ENCODE measurements at regions of chr16 and their contacts with region 1.

Region 1: GRCh38 chr16:10918294-10919002 is 23.8 kb downstream of the DEXI start:
- DNase-seq: peak; percentile 99
- H3K4me3 ChIP-seq: peak overlapping the region in 3 of 4 donors; percentile 26 to 39 (median 27)
- H3K27ac ChIP-seq: peak overlapping the region; percentile 18 to 59 (median 52)
- H3K4me1 ChIP-seq: peaks cover 36 to 48% (median 43%) of the 10 kb centered on the region in 4 donors
- H3K27me3 ChIP-seq: no peaks in the 10 kb centered on the region
- CTCF ChIP-seq: peak; percentile 92 to 98 (median 94)
- EP300 ChIP-seq: peak; percentile 27
- POLR2A ChIP-seq: no peak

Region 2: GRCh38 chr16:10509534-10510025 is 408.9 kb before region 1 on chr16:
- intact Hi-C with region 1: loop called (anchors 5 kb)
- DNase-seq: no peak
- H3K4me3 ChIP-seq: no peak overlapping the region
- H3K27ac ChIP-seq: no peak overlapping the region
- H3K4me1 ChIP-seq: peaks cover 5 to 6% (median 5%) of the 10 kb centered on the region in 4 donors
- H3K27me3 ChIP-seq: no peaks in the 10 kb centered on the region
- CTCF ChIP-seq: peak; percentile 71 to 86 (median 82)
- EP300 ChIP-seq: no peak
- POLR2A ChIP-seq: no peak

Region 3: DNA sequence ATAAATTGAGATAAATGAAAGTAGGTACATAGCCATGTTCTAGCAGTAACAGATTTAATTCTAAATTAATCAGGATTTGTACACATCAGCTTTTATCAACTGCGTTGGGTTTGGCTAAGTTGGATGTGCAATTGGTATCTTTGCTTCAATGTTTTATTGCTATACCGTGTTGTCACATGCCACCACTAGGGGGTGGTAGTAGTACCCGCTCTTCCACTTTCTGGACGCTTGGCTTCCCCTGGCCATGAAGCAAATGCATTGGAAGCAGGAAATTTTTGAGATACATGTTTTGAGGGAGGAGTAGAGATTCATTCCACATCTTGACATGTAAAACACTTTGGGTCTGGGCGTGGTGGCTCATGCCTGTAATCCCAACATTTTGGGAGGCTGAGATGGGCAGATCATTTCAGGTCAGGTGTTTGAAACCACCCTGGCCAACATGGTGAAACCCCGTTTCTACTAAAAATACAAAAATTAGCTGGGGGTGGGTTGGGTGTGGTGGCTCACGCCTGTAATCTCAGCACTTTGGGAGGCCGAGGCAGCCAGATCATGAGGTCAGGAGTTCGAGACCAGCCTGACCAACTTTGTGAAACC is 396.7 kb before region 1 on chr16:
- intact Hi-C with region 1: loop called (anchors 5 kb)
- DNase-seq: no peak
- H3K4me3 ChIP-seq: no peak overlapping the region
- H3K27ac ChIP-seq: no peak overlapping the region
- H3K4me1 ChIP-seq: peaks cover 0 to 7% (median 0%) of the 10 kb centered on the region in 4 donors
- H3K27me3 ChIP-seq: no peaks in the 10 kb centered on the region
- CTCF ChIP-seq: peak; percentile 64 to 88 (median 65)
- EP300 ChIP-seq: no peak
- POLR2A ChIP-seq: no peak

Region 4: GRCh38 chr16:10579965-10580882 is 338.2 kb before region 1 on chr16 and contains the start of gene EMP2:
- intact Hi-C with region 1: loop called (anchors 10 kb)
- DNase-seq: no peak
- H3K4me3 ChIP-seq: peak within 1 kb of the TSS; percentile 72 to 94 (median 85)
- H3K27ac ChIP-seq: peak within 1 kb of the TSS; percentile 88 to 97 (median 93)
- H3K4me1 ChIP-seq: peaks cover 49 to 64% (median 59%) of the 10 kb centered on the region in 4 donors
- H3K27me3 ChIP-seq: no peaks in the 10 kb centered on the region
- CTCF ChIP-seq: peak; percentile 53 to 68 (median 54)
- EP300 ChIP-seq: no peak
- POLR2A ChIP-seq: peak; percentile 68
- total RNA-seq, gene EMP2: 44.1 to 87.1 (median 57.3) TPM

Region 5: DNA sequence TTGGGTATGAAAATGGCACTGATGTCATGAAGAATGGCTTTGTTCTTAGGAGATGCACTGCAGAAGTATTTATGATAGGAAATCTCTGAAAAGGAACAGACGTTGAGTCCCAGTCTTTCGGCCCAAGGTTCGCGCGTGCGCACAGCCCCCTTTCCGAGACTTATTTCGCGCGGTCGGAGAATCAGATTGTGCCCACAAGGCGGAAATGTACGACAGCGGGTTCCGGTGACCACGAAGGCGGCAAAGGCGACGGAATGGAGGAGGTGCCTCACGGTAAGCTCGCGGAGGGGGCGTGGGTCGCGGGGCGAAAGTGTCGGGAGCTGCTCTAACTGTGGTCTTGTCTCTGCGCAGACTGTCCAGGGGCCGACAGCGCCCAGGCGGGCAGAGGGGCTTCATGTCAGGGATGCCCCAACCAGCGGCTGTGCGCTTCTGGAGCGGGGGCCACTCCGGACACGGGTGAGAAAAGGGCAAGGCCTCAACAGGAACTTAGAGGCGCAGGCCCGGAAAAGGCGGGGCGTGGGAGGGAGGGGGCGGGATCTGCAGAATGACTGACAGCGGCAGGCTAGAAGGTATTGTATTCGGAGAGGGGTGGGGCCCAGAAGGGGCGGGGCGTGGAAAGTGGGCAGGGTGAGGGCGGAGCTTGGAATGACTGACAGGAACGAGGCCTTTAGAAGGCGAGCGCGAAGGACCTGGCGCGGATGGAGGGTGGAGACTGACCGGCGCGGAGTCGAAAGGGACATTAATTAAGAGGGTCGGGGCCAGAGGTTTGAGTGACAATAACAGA is 174.6 kb before region 1 on chr16 and contains the start of gene NUBP1:
- intact Hi-C with region 1: loop called (anchors 5 kb)
- DNase-seq: peak; percentile 100
- H3K4me3 ChIP-seq: peak within 1 kb of the TSS; percentile 56 to 77 (median 70)
- H3K27ac ChIP-seq: peak within 1 kb of the TSS; percentile 94 to 97 (median 96)
- H3K4me1 ChIP-seq: peaks cover 34 to 51% (median 38%) of the 10 kb centered on the region in 4 donors
- H3K27me3 ChIP-seq: no peaks in the 10 kb centered on the region
- CTCF ChIP-seq: no peak
- EP300 ChIP-seq: no peak
- POLR2A ChIP-seq: peak; percentile 35
- total RNA-seq, gene NUBP1: 17.4 to 34.7 (median 28.4) TPM

Region 6: GRCh38 chr16:10828851-10829731 is 89.4 kb before region 1 on chr16:
- intact Hi-C with region 1: loop called (anchors 5 kb)
- DNase-seq: peak; percentile 95
- H3K4me3 ChIP-seq: peak overlapping the region; percentile 10 to 38 (median 21)
- H3K27ac ChIP-seq: peak overlapping the region; percentile 87 to 95 (median 88)
- H3K4me1 ChIP-seq: peaks cover 35 to 42% (median 36%) of the 10 kb centered on the region in 4 donors
- H3K27me3 ChIP-seq: no peaks in the 10 kb centered on the region
- CTCF ChIP-seq: no peak
- EP300 ChIP-seq: peak; percentile 40
- POLR2A ChIP-seq: no peak

Measured in esophagus muscularis mucosa (tissue), 4 donors.